ENCODE measurements at regions of chr16 and their contacts with region 1.

Region 1: GRCh38 chr16:57045694-57046381 is 46.5 kb upstream of the CPNE2 start:
- DNase-seq: peak; percentile 55
- ATAC-seq: peak; percentile 43
- H3K4me3 ChIP-seq: no peak overlapping the region
- H3K27ac ChIP-seq: peak overlapping the region; percentile 76
- H3K4me1 ChIP-seq: peaks cover 90% of the 10 kb centered on the region
- H3K27me3 ChIP-seq: no peaks in the 10 kb centered on the region
- CTCF ChIP-seq: peak; percentile 83 to 89 (median 83)
- EP300 ChIP-seq: peak; percentile 42 to 50; a peak in 1 of 4 replicates
- POLR2A ChIP-seq: peak; percentile 41; the same call in 1 of the 2 replicates
- RAD21 ChIP-seq: peak; percentile 88

Region 2: DNA sequence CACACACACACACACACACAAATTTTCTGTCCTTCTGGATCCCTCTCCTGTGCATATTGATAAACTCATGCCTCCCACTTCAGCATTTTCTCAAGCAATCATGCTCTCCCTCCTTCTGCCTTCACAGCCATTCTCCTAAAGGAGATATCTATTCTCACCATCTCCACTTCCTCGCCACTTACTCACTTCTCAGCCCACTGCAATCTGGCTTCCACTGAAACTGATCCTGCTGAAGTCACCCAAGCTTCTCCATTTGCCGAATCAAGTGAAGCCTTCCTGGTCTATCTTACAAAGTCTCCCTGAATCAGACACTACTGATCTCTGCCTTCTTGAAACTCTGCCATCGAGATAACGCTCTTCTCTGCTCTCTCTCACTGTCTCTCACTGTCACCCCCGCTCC is 908.6 kb before region 1 on chr16:
- CTCF ChIA-PET with region 1: no interaction called
- POLR2A ChIA-PET with region 1: no interaction called
- RAD21 ChIA-PET with region 1: no interaction called
- SMC1A ChIA-PET with region 1: no interaction called
- in situ Hi-C with region 1: no loop called
- intact Hi-C with region 1: no loop called
- DNase-seq: no peak
- ATAC-seq: no peak
- H3K4me3 ChIP-seq: no peak overlapping the region
- H3K27ac ChIP-seq: no peak overlapping the region
- H3K4me1 ChIP-seq: no peaks in the 10 kb centered on the region
- H3K27me3 ChIP-seq: no peaks in the 10 kb centered on the region; a peak in 1 of 4 replicates
- CTCF ChIP-seq: no peak
- EP300 ChIP-seq: no peak
- POLR2A ChIP-seq: no peak
- RAD21 ChIP-seq: no peak

Region 3: GRCh38 chr16:56860226-56861020 is 185.4 kb before region 1 on chr16:
- CTCF ChIA-PET with region 1: interaction called, 3 read pairs
- POLR2A ChIA-PET with region 1: no interaction called
- RAD21 ChIA-PET with region 1: no interaction called
- SMC1A ChIA-PET with region 1: interaction called, 3 read pairs
- in situ Hi-C with region 1: loop called (anchors 5 kb)
- intact Hi-C with region 1: loop called (anchors 5 kb)
- DNase-seq: peak; percentile 75
- ATAC-seq: peak; percentile 93
- H3K4me3 ChIP-seq: 0 out of 2 replicates have a peak overlapping the region, but pooled peaks have one; percentile 13
- H3K27ac ChIP-seq: peak overlapping the region; percentile 52
- H3K4me1 ChIP-seq: peaks cover 33% of the 10 kb centered on the region
- H3K27me3 ChIP-seq: no peaks in the 10 kb centered on the region
- CTCF ChIP-seq: no peak
- EP300 ChIP-seq: no peak
- POLR2A ChIP-seq: no peak
- RAD21 ChIP-seq: no peak; the same call in 1 of the 2 replicates

Region 4: GRCh38 chr16:56970934-56971767 is 74.7 kb before region 1 on chr16:
- CTCF ChIA-PET with region 1: interaction called, 212 read pairs
- POLR2A ChIA-PET with region 1: interaction called, 53 read pairs
- RAD21 ChIA-PET with region 1: interaction called, 115 read pairs
- SMC1A ChIA-PET with region 1: interaction called, 111 read pairs
- in situ Hi-C with region 1: loop called (anchors 5 kb)
- intact Hi-C with region 1: no loop called
- DNase-seq: peak; percentile 80
- ATAC-seq: peak; percentile 85
- H3K4me3 ChIP-seq: no peak overlapping the region
- H3K27ac ChIP-seq: peak overlapping the region; percentile 27; the same call in 1 of the 2 replicates
- H3K4me1 ChIP-seq: peaks cover 46% of the 10 kb centered on the region
- H3K27me3 ChIP-seq: no peaks in the 10 kb centered on the region
- CTCF ChIP-seq: peak in 1 of 3 experiments; percentile 20; a peak in 1 of 6 replicates
- EP300 ChIP-seq: peak; percentile 37 to 70; a peak in 2 of 4 replicates
- POLR2A ChIP-seq: 0 out of 2 replicates have a peak, but pooled peaks have one; percentile 21
- RAD21 ChIP-seq: peak; percentile 29; the same call in 1 of the 2 replicates

Region 5: DNA sequence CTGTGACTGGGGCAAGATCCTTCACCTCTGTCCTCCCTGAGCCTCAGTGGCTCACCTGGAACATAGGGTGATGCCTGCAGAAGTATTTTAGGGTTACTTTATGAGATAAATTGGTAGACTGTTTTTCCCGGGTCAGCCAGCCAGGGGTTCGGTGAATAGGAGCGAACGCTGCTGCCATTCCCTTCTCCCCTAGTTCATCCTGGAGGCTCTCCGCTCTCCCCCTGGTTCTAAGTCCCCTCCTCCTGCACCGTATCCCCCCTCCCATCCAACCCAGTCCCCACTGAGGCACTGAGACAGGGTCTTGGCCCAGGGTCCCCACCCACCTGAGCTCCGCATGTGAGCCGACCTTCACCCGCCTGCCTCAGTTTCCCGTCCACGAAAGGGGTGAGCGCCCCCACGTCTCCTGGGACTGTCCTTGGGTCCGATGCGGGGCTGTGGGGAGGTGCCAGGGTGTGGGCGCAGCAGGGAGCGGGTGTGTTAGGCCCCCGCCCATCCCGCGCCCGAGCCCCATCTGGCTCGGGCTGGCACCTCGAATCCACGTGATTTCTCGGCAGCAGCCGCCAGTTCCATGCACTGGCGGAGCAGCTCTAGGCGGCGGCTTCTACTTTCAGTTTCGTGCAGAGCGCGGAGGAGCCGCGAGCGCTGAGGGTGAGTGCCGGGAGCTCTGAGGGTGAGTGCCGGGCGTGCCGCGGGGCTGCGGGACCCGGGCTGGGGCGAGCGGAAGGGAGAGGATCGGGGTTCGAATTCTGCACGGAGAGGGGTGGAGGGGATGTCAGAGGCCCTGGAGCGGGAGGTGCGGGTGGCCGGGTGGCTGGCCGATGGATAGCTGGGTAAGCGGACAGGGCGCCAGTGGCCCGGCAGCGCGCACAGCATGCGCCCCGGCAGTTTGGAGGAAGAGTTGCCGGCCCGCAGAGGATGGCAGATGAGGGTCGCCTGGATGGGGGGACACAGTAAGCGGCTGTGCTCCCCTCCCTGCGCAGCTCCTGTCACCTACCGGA is 56.6 kb before region 1 on chr16 and contains the start of gene NLRC5:
- CTCF ChIA-PET with region 1: interaction called, 32 read pairs
- POLR2A ChIA-PET with region 1: interaction called, 104 read pairs
- RAD21 ChIA-PET with region 1: interaction called, 75 read pairs
- SMC1A ChIA-PET with region 1: interaction called, 111 read pairs
- in situ Hi-C with region 1: no loop called
- intact Hi-C with region 1: no loop called
- DNase-seq: no peak
- ATAC-seq: peak; percentile 83
- H3K4me3 ChIP-seq: peak within 1 kb of the TSS; percentile 79
- H3K27ac ChIP-seq: peak within 1 kb of the TSS; percentile 88
- H3K4me1 ChIP-seq: peaks cover 32% of the 10 kb centered on the region
- H3K27me3 ChIP-seq: no peaks in the 10 kb centered on the region
- CTCF ChIP-seq: no peak
- EP300 ChIP-seq: no peak
- POLR2A ChIP-seq: peak; percentile 87
- RAD21 ChIP-seq: no peak
- polyA plus RNA-seq, gene NLRC5: 13.1 to 14.2 TPM

Region 6: DNA sequence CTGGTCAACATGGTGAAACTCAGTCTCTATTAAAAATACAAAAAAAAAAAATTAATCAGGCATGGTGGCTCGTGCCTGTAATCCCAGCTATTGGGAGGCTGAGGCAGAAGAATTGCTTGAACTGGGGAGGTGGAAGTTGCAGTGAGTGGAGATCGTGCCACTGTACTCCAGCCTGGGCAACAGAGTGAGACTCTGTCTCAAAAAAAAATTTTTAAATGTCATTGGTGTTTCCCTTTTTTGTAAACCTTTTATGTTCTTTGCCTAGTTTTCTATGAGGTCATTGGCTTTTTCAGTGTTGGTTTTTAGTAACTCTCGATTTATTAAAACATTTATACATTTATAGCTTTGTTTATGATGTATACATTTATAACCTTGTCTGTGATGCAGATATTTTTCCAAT is 38.3 kb before region 1 on chr16:
- CTCF ChIA-PET with region 1: interaction called, 21 read pairs
- POLR2A ChIA-PET with region 1: interaction called, 40 read pairs
- RAD21 ChIA-PET with region 1: interaction called, 33 read pairs
- SMC1A ChIA-PET with region 1: interaction called, 17 read pairs
- in situ Hi-C with region 1: no loop called
- intact Hi-C with region 1: loop called (anchors 5 kb)
- DNase-seq: no peak
- ATAC-seq: no peak
- H3K4me3 ChIP-seq: no peak overlapping the region
- H3K27ac ChIP-seq: peak overlapping the region; percentile 62
- H3K4me1 ChIP-seq: peaks cover 73% of the 10 kb centered on the region
- H3K27me3 ChIP-seq: no peaks in the 10 kb centered on the region
- CTCF ChIP-seq: no peak
- EP300 ChIP-seq: no peak
- POLR2A ChIP-seq: no peak
- RAD21 ChIP-seq: no peak

Region 7: GRCh38 chr16:57023541-57024249 is 22.1 kb before region 1 on chr16:
- CTCF ChIA-PET with region 1: interaction called, 4 read pairs
- POLR2A ChIA-PET with region 1: interaction called, 8 read pairs
- RAD21 ChIA-PET with region 1: interaction called, 21 read pairs
- SMC1A ChIA-PET with region 1: interaction called, 14 read pairs
- in situ Hi-C with region 1: no loop called
- intact Hi-C with region 1: no loop called
- DNase-seq: no peak
- ATAC-seq: peak; percentile 58
- H3K4me3 ChIP-seq: no peak overlapping the region
- H3K27ac ChIP-seq: no peak overlapping the region
- H3K4me1 ChIP-seq: no peaks in the 10 kb centered on the region; the same call in 1 of the 2 replicates
- H3K27me3 ChIP-seq: no peaks in the 10 kb centered on the region
- CTCF ChIP-seq: no peak
- EP300 ChIP-seq: no peak
- POLR2A ChIP-seq: no peak
- RAD21 ChIP-seq: no peak